Naive thymus-derived CD8-positive, alpha-beta T cell (primary cell): ENCODE measurements at regions of chr6 and their contacts with region 1.

Region 1: GRCh38 chr6:27479319-27480182 is 6.6 kb upstream of the ZNF184 start:
- DNase-seq: peak; percentile 75 to 97 (median 92)
- ATAC-seq: peak; percentile 71 to 74
- H3K4me3 Mint-ChIP-seq: no peak overlapping the region
- H3K27ac Mint-ChIP-seq: no peak overlapping the region
- H3K4me1 Mint-ChIP-seq: peaks cover 0 to 15% (median 3%) of the 10 kb centered on the region in 4 donors
- H3K27me3 Mint-ChIP-seq: no peaks in the 10 kb centered on the region

Region 2: DNA sequence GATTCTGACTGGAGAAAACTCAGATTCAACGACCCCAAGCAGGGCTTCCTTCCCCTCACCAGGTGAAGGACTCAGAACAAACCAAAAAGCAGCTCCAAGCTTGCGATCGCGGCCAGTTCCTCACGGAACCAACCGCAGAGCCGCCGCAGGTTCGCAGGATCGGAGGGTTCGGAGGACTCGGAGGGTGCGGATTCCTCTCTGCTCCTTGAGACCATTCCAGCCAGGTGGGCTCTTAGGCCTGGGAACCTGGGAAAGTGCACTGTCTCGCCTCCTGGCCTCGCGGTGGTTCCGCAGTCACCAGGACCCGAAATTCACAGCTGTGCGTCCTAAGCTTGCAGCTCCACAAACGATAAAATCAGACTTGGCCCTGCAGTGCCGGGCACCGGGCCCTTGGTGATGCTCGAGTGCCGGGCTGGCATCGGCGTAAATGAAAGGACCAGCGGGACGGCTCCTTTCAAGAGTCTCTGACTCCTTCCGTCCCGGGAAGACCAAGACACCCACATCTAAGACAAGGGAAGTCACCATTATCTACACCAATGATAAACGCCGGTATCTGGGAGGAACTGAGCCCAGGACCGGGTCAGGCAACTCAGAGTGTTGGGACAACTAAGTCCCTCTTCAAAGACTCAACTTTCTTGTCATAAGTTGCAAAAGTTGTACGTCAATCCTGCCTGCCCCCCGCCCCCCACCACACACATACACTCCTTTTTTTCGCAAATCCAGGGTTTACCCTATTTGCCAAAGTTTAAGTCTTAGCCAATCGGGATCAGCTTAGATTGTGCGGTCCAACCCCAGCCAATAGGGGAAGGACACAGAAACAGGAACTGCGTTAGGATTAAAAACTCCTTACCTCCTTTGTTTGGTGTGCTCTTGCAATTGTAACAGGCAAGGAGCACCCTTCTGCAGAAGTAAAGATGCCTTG is 301.8 kb before region 1 on chr6:
- POLR2A ChIA-PET with region 1: interaction called, 12 read pairs
- DNase-seq: peak; percentile 52 to 83 (median 66)
- ATAC-seq: peak; percentile 76 to 82
- H3K4me3 Mint-ChIP-seq: peak overlapping the region; percentile 90 to 98 (median 97)
- H3K27ac Mint-ChIP-seq: peak overlapping the region; percentile 86 to 99 (median 92)
- H3K4me1 Mint-ChIP-seq: peaks cover 3 to 23% (median 16%) of the 10 kb centered on the region in 4 donors
- H3K27me3 Mint-ChIP-seq: peaks cover 0 to 7% (median 2%) of the 10 kb centered on the region in 5 donors

Region 3: GRCh38 chr6:27388293-27389197 is 91.0 kb before region 1 on chr6 and contains the start of gene ZNF391:
- POLR2A ChIA-PET with region 1: interaction called, 15 read pairs
- DNase-seq: peak; percentile 37 to 80 (median 66)
- ATAC-seq: peak; percentile 90 to 91
- H3K4me3 Mint-ChIP-seq: peak within 1 kb of the TSS; percentile 94 to 99 (median 98)
- H3K27ac Mint-ChIP-seq: peak within 1 kb of the TSS; percentile 92 to 99 (median 96)
- H3K4me1 Mint-ChIP-seq: peaks cover 14 to 25% (median 18%) of the 10 kb centered on the region in 4 donors
- H3K27me3 Mint-ChIP-seq: no peaks in the 10 kb centered on the region
- polyA plus RNA-seq, gene ZNF391: 2.0 to 5.1 (median 3.4) TPM

Region 4: DNA sequence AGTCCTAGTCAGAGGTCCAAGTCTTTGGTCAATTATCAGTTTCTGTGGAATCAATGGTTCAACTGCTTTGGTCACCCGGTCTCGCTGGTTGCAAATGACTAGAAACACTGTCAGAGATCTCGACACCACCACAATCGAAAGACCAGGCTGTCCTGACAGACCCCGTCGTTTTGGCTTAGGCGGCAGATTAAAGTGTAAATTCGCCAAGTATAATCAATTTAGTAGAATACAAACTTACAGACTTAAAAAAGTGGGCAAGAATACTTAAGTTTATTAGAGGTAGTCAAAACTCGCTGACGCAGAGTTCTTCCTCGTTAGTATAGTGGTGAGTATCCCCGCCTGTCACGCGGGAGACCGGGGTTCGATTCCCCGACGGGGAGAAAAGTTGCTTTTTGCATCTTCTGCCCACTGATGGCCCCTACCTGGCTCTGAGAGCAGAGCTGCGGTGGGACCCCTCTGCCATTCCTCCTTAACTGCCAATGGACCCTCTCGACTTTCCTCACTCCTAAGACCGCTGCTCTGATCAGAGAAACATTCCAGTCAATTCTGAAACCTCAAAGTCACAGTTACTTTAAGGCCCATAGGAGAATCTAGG is 24.0 kb after region 1 on chr6:
- POLR2A ChIA-PET with region 1: interaction called, 22 read pairs
- DNase-seq: peak; percentile 62 to 90 (median 84)
- ATAC-seq: peak; percentile 59
- H3K4me3 Mint-ChIP-seq: peak overlapping the region; percentile 86 to 96 (median 92)
- H3K27ac Mint-ChIP-seq: peak overlapping the region; percentile 68 to 97 (median 88)
- H3K4me1 Mint-ChIP-seq: peaks cover 28 to 37% (median 29%) of the 10 kb centered on the region in 4 donors
- H3K27me3 Mint-ChIP-seq: peaks cover under 1 to 20% (median 11%) of the 10 kb centered on the region in 5 donors

Region 5: DNA sequence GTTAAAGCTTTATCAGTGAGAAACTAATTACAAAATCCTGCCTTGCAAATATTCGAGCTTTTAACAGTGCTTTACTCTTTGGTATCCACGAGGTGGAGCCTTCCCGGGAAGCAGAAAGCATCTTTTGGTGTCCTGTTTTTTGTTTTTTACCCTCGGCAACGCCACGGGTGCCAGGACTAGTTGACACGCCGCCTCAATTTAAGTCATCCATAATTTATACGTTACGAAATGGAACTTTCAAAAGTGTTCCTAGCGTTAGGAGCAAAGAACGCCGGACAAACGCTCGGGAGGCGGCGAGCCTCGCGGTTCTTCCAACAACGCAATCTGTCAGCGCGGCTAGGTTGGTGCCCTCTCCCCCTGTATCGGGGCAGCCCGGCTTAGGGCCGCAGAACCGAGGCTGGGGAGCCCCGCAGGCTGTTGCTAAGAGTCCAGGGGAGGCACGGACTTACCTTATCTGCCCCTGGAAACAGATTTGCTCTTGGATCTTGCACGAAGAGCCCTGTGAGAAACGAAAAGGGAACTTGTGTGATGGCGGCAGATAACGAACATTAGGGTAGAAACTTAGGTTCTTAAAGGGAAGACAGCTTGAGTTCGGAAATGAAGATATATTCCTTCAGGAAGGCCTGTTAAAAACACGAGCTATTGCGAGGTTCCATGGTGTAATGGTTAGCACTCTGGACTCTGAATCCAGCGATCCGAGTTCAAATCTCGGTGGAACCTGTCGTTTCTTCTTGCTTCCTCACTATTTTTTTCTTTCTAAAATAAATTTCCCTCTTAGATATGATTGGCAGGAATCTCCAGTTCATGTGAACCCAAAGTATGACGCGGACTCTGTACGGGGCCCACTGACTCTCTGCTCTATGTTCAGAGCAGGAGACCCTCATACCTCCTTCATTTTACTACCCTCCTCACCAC is 39.6 kb after region 1 on chr6:
- POLR2A ChIA-PET with region 1: interaction called, 12 read pairs
- DNase-seq: peak; percentile 19 to 78 (median 71)
- ATAC-seq: peak; percentile 76 to 82
- H3K4me3 Mint-ChIP-seq: peak overlapping the region; percentile 88 to 95 (median 93)
- H3K27ac Mint-ChIP-seq: peak overlapping the region; percentile 79 to 95 (median 86)
- H3K4me1 Mint-ChIP-seq: peaks cover 7 to 23% (median 20%) of the 10 kb centered on the region in 4 donors
- H3K27me3 Mint-ChIP-seq: peaks cover 8 to 31% (median 15%) of the 10 kb centered on the region in 5 donors

Region 6: DNA sequence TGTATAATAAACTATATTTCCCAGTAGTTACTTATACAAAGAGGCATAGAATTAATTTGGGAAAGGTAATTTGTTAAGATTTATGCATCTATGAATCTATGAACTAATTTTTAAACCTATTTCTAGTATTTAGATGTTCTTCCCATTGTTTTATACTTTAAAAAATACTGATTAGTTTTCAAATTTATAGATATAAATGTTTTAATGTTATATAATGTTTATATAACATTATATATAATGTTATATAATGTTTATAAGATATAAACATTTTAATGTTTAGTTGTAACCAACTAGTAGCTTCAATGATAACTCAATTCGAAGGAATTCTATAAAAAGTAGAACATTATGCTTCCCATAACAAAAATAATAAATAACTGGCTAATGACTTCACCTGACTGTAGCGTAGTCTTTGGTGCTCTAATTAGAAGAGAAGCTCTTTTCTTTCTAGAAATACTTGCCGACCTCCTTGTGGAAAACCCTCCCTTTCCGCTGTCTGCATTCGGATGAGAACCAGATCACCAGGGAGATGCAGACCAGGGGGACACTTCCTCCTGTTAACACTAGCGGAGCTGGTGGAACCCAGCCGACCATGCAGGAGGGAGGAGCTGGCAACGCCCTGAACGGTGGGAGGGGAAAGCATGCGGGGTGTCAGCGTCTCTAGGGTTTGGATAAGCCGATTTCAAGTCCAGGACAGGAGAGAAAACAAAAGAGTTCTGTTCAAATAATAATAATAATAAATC is 274.3 kb after region 1 on chr6:
- POLR2A ChIA-PET with region 1: interaction called, 17 read pairs
- DNase-seq: peak; percentile 40 to 76 (median 52)
- ATAC-seq: peak; percentile 17 to 29
- H3K4me3 Mint-ChIP-seq: peak overlapping the region; percentile 90 to 100 (median 96)
- H3K27ac Mint-ChIP-seq: peak overlapping the region; percentile 48 to 100 (median 88)
- H3K4me1 Mint-ChIP-seq: peaks cover 19 to 50% (median 32%) of the 10 kb centered on the region in 4 donors
- H3K27me3 Mint-ChIP-seq: peaks cover 0 to 2% (median 1%) of the 10 kb centered on the region in 5 donors

Region 7: GRCh38 chr6:27838058-27838944 is 358.8 kb after region 1 on chr6:
- POLR2A ChIA-PET with region 1: interaction called, 12 read pairs
- DNase-seq: peak; percentile 63 to 95 (median 88)
- ATAC-seq: peak; percentile 78 to 81
- H3K4me3 Mint-ChIP-seq: no peak overlapping the region
- H3K27ac Mint-ChIP-seq: no peak overlapping the region
- H3K4me1 Mint-ChIP-seq: peaks cover 8 to 36% (median 18%) of the 10 kb centered on the region in 4 donors
- H3K27me3 Mint-ChIP-seq: peaks cover 0 to 8% (median 0%) of the 10 kb centered on the region in 5 donors